ENCODE measurements at regions of chr11 and their contacts with region 1.

Region 1: DNA sequence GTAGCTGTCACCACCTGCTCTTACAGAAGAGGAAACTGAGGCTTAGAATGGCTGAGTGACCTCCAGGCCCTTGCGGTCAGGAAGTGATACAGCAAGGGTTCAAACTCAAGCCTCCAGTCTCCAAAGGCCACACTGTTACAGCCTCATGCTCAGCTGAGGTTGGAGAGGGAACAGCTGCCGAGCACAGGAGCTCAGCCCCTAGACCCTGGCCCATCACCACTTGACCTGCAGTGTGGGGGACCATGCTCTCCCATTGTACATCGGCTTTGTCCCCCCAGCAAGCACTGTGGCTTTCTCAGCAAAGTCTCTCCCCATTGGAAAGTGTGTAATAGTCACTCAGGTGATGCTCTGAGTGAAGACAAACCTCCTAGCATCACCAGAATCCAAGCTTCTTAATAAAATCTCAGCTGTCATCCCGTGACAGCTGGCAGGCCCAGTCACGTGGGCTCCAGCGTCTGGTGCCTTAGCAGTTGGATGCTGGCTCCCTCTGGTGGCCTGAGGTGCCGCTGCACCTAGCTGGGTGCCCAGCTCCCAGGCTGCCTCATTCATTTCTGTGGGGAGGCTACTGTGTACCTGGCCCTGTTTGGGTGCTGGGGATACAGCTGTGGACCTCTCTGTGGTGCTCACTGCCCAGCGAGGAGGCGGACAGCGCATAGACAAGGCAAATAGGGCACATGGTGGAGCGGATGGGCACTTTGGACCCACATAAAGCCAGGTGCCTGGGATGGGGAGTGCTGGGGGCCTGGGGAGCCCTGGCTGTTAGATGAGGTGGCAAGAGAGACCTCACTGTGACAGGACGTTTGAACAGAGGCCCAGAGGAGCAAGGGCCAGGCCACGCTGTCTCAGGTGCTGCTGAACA is 19.1 kb upstream of the MYRF start:
- DNase-seq: peak; percentile 84 to 97 (median 93)

Region 2: DNA sequence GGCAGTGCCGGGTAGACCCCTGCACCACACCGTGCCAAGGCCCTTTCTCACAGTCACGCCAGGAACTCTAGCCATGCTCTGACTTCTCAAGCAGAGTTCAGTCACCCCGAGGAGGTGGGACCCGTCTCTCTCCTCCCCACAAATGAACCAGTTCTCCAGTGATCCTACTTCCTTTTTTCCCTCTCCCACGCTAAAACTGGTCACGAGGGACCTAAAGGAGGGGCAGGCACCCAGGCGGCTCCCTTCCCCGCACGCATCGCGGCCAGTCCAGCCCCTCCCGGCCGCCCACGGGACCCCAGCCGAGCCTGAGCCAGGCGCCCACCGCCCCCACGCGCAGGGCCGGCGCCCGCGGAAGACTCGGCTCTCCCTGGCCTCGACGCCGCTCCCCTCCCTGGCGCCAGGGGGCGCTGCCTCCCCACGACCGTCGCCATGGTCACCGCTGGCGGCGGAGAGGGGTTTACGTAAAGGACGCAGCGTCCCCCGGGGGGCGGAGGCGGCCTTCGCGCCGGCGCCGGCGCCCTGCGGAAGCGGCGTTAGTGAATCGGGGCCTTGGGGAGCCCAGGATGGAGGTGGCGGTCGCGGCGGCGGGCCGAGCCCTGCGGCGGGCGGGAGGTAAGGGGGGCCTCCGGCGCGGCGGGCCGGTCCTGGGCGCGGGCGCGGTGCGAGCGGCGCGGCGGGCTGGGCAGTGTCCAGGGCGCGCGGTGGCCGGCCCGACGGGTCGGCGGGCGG is 53.3 kb before region 1 on chr11 and contains the start of gene DAGLA:
- intact Hi-C with region 1: loop called (anchors 1 kb)
- DNase-seq: peak in 41 of 42 donors; percentile 55 to 92 (median 84)

Region 3: GRCh38 chr11:62787005-62787759 is 1053.8 kb after region 1 on chr11 and contains the start of gene TMEM179B:
- intact Hi-C with region 1: no loop called
- DNase-seq: peak; percentile 96 to 100 (median 99)